Caco-2 (cell line): ENCODE measurements at regions of chr5 and their contacts with region 1.

Region 1: GRCh38 chr5:16864631-16865131 is 71.4 kb downstream of the MYO10 start:
- DNase-seq: no peak
- H3K4me3 ChIP-seq: no peak overlapping the region
- H3K4me3 Mint-ChIP-seq: no peak overlapping the region
- H3K27ac Mint-ChIP-seq: peak overlapping the region; percentile 83
- H3K4me1 ChIP-seq: peaks cover 48% of the 10 kb centered on the region
- H3K4me1 Mint-ChIP-seq: peaks cover 43% of the 10 kb centered on the region
- H3K27me3 ChIP-seq: no peaks in the 10 kb centered on the region
- H3K27me3 Mint-ChIP-seq: no peaks in the 10 kb centered on the region
- CTCF ChIP-seq: no peak

Region 2: GRCh38 chr5:16693879-16694278 is 170.8 kb before region 1 on chr5:
- CTCF ChIA-PET with region 1: no interaction called
- POLR2A ChIA-PET with region 1: no interaction called
- intact Hi-C with region 1: no loop called
- DNase-seq: no peak
- H3K4me3 ChIP-seq: no peak overlapping the region
- H3K4me3 Mint-ChIP-seq: no peak overlapping the region
- H3K27ac Mint-ChIP-seq: peak overlapping the region; percentile 13
- H3K4me1 ChIP-seq: no peaks in the 10 kb centered on the region
- H3K4me1 Mint-ChIP-seq: peaks cover 6% of the 10 kb centered on the region
- H3K27me3 ChIP-seq: no peaks in the 10 kb centered on the region
- H3K27me3 Mint-ChIP-seq: no peaks in the 10 kb centered on the region
- CTCF ChIP-seq: no peak

Region 3: GRCh38 chr5:16819522-16820167 is 45.0 kb before region 1 on chr5:
- CTCF ChIA-PET with region 1: no interaction called
- POLR2A ChIA-PET with region 1: no interaction called
- intact Hi-C with region 1: loop called (anchors 5 kb)
- DNase-seq: no peak
- H3K4me3 ChIP-seq: no peak overlapping the region
- H3K4me3 Mint-ChIP-seq: no peak overlapping the region
- H3K27ac Mint-ChIP-seq: no peak overlapping the region
- H3K4me1 ChIP-seq: peaks cover 3% of the 10 kb centered on the region; the same call in 1 of the 2 replicates
- H3K4me1 Mint-ChIP-seq: peaks cover 8% of the 10 kb centered on the region
- H3K27me3 ChIP-seq: no peaks in the 10 kb centered on the region
- H3K27me3 Mint-ChIP-seq: no peaks in the 10 kb centered on the region
- CTCF ChIP-seq: no peak

Region 4: DNA sequence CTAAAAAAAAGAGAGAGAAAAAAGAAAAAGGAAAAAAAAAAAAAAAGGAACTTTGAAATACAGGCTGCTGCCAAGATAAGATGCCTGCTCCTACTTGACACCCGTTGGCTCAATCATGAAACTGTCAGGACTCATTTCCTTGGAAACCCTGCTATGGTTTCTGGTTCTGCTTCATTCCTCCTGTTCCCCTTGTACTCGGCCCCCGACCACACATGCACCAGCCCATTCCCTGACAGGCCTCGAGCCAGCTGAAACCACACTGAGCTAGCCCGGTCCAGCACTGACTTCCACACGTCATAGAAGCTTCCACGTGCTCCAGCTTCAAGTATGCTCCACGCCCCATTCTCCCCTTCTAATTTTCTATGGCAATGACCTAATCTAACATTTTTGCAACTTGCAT is 21.8 kb before region 1 on chr5:
- CTCF ChIA-PET with region 1: no interaction called
- POLR2A ChIA-PET with region 1: no interaction called
- intact Hi-C with region 1: loop called (anchors 1 kb)
- DNase-seq: no peak
- H3K4me3 ChIP-seq: no peak overlapping the region
- H3K4me3 Mint-ChIP-seq: no peak overlapping the region
- H3K27ac Mint-ChIP-seq: no peak overlapping the region
- H3K4me1 ChIP-seq: no peaks in the 10 kb centered on the region
- H3K4me1 Mint-ChIP-seq: peaks cover 17% of the 10 kb centered on the region
- H3K27me3 ChIP-seq: no peaks in the 10 kb centered on the region
- H3K27me3 Mint-ChIP-seq: no peaks in the 10 kb centered on the region
- CTCF ChIP-seq: no peak

Region 5: GRCh38 chr5:16881251-16881650 is 16.6 kb after region 1 on chr5:
- CTCF ChIA-PET with region 1: no interaction called
- POLR2A ChIA-PET with region 1: no interaction called
- intact Hi-C with region 1: loop called (anchors 1 kb)
- DNase-seq: peak; percentile 80 to 85
- H3K4me3 ChIP-seq: no peak overlapping the region; the same call in 1 of the 2 replicates
- H3K4me3 Mint-ChIP-seq: peak overlapping the region; percentile 73
- H3K27ac Mint-ChIP-seq: peak overlapping the region; percentile 90
- H3K4me1 ChIP-seq: peaks cover 80% of the 10 kb centered on the region
- H3K4me1 Mint-ChIP-seq: peaks cover 53% of the 10 kb centered on the region
- H3K27me3 ChIP-seq: no peaks in the 10 kb centered on the region
- H3K27me3 Mint-ChIP-seq: no peaks in the 10 kb centered on the region
- CTCF ChIP-seq: no peak

Region 6: DNA sequence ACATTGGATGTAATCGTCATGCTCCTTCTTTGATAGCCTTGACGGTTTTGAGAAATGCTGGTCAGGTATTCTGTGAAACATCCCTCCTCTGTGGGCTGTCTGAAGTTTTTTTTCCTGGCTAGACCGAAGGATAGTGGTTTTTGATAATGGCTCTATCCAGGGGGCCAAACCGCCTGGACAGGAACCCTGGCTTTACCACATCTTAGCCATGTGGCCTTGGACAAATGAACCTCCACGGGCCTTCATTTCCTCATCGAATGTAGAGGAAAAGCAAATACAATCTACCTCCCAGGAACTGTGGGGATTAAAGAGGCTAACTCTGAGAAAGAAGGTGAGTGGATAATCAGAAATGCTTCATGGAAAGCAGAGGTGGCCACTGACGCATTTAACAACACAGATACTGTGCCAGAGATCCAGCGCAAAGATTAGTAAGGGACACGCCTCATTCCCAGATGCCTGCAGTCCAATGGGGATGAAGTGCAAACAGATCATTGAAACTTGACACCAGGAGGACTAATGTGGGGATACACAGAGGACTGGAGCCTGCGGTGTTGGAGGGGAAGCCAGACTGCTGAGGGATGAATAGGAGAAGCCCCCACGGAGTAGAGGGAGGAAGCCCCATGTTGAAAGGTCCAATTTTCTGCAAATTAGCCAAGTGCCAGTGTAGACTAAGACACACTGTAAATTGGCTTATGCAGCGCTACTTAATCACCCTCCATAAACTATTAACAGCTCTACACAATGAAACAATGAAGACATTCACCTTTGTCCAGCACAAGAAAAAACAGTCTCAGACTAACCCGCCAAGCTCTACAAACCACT is 29.8 kb after region 1 on chr5:
- CTCF ChIA-PET with region 1: interaction called, 4 read pairs
- POLR2A ChIA-PET with region 1: no interaction called
- intact Hi-C with region 1: loop called (anchors 1 kb)
- DNase-seq: peak; percentile 81 to 87
- H3K4me3 ChIP-seq: peak overlapping the region; percentile 5; the same call in 1 of the 2 replicates
- H3K4me3 Mint-ChIP-seq: peak overlapping the region; percentile 66
- H3K27ac Mint-ChIP-seq: peak overlapping the region; percentile 88
- H3K4me1 ChIP-seq: peaks cover 90% of the 10 kb centered on the region
- H3K4me1 Mint-ChIP-seq: peaks cover 70% of the 10 kb centered on the region
- H3K27me3 ChIP-seq: no peaks in the 10 kb centered on the region
- H3K27me3 Mint-ChIP-seq: no peaks in the 10 kb centered on the region
- CTCF ChIP-seq: no peak

Region 7: GRCh38 chr5:16913187-16914107 is 48.8 kb after region 1 on chr5:
- CTCF ChIA-PET with region 1: no interaction called
- POLR2A ChIA-PET with region 1: no interaction called
- intact Hi-C with region 1: loop called (anchors 2 kb)
- DNase-seq: no peak
- H3K4me3 ChIP-seq: no peak overlapping the region
- H3K4me3 Mint-ChIP-seq: no peak overlapping the region
- H3K27ac Mint-ChIP-seq: no peak overlapping the region
- H3K4me1 ChIP-seq: peaks cover 6% of the 10 kb centered on the region
- H3K4me1 Mint-ChIP-seq: peaks cover 7% of the 10 kb centered on the region
- H3K27me3 ChIP-seq: no peaks in the 10 kb centered on the region
- H3K27me3 Mint-ChIP-seq: no peaks in the 10 kb centered on the region
- CTCF ChIP-seq: no peak